Activated CD8-positive, alpha-beta T cell treated with anti-CD3 and anti-CD28 coated beads for 36 hours (primary cell): ENCODE measurements at regions of chr9 and their contacts with region 1.

Region 1: GRCh38 chr9:613771-614347 is 227.6 kb upstream of the DMRT1 start:
- DNase-seq: peak; percentile 62
- ATAC-seq: peak; percentile 83
- H3K4me3 Mint-ChIP-seq: no peak overlapping the region
- H3K27ac Mint-ChIP-seq: no peak overlapping the region
- H3K4me1 Mint-ChIP-seq: peaks cover 4% of the 10 kb centered on the region
- H3K27me3 Mint-ChIP-seq: no peaks in the 10 kb centered on the region
- CTCF ChIP-seq: peak; percentile 83

Region 2: DNA sequence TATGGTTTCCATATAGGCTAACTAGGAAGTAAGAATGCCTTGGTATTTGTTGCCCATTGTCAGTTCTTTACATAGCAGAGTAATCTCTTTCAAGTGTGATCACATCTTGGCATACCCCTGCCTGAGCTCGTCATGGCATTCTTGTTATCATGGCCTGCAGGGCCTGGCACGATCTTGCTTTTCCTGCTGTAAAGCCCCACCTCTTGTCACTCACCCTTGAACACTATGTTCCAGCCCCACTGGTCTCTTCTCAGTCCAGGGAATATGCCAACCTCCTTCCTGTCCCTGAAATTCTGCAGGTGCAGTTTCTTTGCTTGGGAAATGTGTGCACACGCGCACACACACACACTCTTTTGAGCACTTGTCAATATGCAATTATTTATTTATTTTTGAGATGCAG is 22.6 kb before region 1 on chr9:
- CTCF ChIA-PET with region 1: no interaction called
- POLR2A ChIA-PET with region 1: no interaction called
- intact Hi-C with region 1: no loop called
- DNase-seq: no peak
- ATAC-seq: no peak
- H3K4me3 Mint-ChIP-seq: no peak overlapping the region
- H3K27ac Mint-ChIP-seq: no peak overlapping the region
- H3K4me1 Mint-ChIP-seq: peaks cover 8% of the 10 kb centered on the region
- H3K27me3 Mint-ChIP-seq: no peaks in the 10 kb centered on the region
- CTCF ChIP-seq: no peak

Region 3: DNA sequence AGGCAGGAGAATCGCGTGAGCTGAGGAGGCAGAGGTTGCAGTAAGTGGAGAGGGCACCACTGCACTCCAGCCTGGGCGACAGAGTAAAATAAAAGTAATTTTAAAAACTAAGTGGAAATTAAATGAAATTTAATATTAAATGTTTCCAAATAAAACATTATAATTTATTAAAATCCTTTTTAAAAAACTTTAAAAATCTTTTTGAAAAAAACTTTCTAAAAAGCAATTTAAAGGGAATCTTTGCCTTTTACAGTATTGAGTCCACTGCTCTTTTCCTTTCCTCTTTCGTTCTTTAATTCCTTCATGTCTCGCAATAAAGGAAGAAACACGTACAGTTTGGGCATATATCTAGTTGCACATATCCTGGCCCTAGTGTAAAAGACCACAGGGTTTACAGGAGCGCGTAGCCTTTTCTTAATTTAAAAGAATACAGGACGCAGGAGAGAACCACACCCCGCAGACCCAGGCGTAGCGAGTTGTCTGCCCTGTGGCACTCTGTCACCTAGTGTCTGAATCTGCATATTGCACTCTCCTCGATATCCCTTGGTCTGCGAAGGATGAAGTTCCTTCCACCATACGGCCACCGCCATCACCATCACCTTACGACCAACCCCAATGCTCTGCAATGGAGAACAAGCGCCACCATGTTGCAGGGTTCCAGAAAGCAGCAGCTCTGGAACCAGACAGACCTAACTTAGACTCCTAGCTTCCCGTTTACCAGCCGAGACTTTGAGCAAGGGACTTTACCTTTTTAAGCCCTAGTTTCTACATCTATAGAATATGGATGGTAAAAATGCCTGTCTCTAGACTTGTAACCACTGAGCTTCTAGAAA is 150.0 kb after region 1 on chr9:
- CTCF ChIA-PET with region 1: interaction called, 17 read pairs
- POLR2A ChIA-PET with region 1: no interaction called
- intact Hi-C with region 1: loop called (anchors 5 kb)
- DNase-seq: peak; percentile 68
- ATAC-seq: peak; percentile 100
- H3K4me3 Mint-ChIP-seq: no peak overlapping the region
- H3K27ac Mint-ChIP-seq: no peak overlapping the region
- H3K4me1 Mint-ChIP-seq: no peaks in the 10 kb centered on the region
- H3K27me3 Mint-ChIP-seq: peaks cover 16% of the 10 kb centered on the region
- CTCF ChIP-seq: peak; percentile 73

Region 4: GRCh38 chr9:806285-807156 is 192.7 kb after region 1 on chr9:
- CTCF ChIA-PET with region 1: interaction called, 7 read pairs
- POLR2A ChIA-PET with region 1: no interaction called
- intact Hi-C with region 1: loop called (anchors 2 kb)
- DNase-seq: no peak
- ATAC-seq: peak; percentile 37
- H3K4me3 Mint-ChIP-seq: no peak overlapping the region
- H3K27ac Mint-ChIP-seq: no peak overlapping the region
- H3K4me1 Mint-ChIP-seq: no peaks in the 10 kb centered on the region
- H3K27me3 Mint-ChIP-seq: peaks cover 3% of the 10 kb centered on the region
- CTCF ChIP-seq: peak; percentile 60

Region 5: GRCh38 chr9:1009101-1009707 is 395.3 kb after region 1 on chr9:
- CTCF ChIA-PET with region 1: interaction called, 7 read pairs
- POLR2A ChIA-PET with region 1: no interaction called
- intact Hi-C with region 1: loop called (anchors 10 kb)
- DNase-seq: peak; percentile 82
- ATAC-seq: peak; percentile 99
- H3K4me3 Mint-ChIP-seq: no peak overlapping the region
- H3K27ac Mint-ChIP-seq: no peak overlapping the region
- H3K4me1 Mint-ChIP-seq: peaks cover 3% of the 10 kb centered on the region
- H3K27me3 Mint-ChIP-seq: peaks cover 34% of the 10 kb centered on the region
- CTCF ChIP-seq: peak; percentile 89